AG04450 (cell line): ENCODE measurements at regions of chr3 and their contacts with region 1.

Region 1: DNA sequence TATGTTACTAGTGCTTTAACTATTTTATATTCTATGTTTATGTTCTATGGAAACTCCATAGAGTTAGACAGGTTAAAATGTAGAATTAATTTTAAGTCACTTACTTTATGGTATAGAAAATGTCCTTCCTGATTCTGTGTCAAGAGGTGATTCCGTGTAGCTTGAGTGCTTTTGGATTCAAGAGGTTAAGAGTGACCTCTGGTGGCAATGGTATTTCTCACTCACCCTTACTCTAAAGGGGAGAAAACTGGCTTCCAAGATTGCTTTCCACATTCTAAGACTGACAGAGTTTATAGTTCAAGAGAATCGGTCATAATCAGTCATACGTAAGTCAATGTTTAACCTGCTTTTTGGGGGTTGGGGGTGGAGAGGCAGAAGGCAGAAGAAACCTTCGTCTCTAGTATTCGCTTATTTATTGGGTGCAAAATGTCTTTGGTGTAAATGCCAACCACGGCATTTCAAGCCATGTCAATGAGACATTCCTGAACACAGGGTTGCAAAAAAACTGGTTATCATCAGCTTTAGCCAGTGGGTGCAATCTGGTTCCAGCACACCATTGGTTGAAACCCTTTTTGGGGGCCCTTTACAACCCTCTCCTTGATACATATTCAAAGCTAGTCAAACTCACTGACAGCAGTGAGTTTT is 92.0 kb upstream of the VGLL3 start:
- DNase-seq: peak; percentile 30
- H3K4me3 ChIP-seq: no peak overlapping the region
- H3K27ac ChIP-seq: no peak overlapping the region
- H3K27me3 ChIP-seq: no peaks in the 10 kb centered on the region
- CTCF ChIP-seq: peak; percentile 78

Region 2: GRCh38 chr3:86774082-86774691 is 308.7 kb before region 1 on chr3:
- CTCF ChIA-PET with region 1: interaction called, 165 read pairs
- POLR2A ChIA-PET with region 1: no interaction called
- DNase-seq: no peak
- H3K4me3 ChIP-seq: no peak overlapping the region
- H3K27ac ChIP-seq: no peak overlapping the region
- H3K27me3 ChIP-seq: no peaks in the 10 kb centered on the region
- CTCF ChIP-seq: peak; percentile 57

Region 3: DNA sequence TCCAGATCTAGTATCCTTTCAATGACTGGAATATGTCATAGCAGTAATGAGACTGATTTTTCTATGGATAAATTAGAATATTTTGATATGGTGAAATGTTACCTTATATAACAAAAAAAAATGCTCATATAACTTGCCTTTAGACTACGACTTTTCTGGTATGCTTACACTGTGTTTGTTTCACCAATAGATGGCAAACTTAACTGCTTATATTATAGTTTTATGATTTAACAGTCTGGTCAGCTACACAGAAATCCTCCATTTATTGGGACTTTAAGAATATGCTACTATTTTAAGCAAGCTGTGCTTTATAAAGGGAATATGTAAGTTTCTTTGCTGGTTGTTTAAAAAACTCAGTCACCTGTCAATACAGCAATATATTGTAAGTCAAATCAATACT is 297.5 kb before region 1 on chr3:
- CTCF ChIA-PET with region 1: interaction called, 65 read pairs
- POLR2A ChIA-PET with region 1: no interaction called
- DNase-seq: no peak
- H3K4me3 ChIP-seq: no peak overlapping the region
- H3K27ac ChIP-seq: no peak overlapping the region
- H3K27me3 ChIP-seq: no peaks in the 10 kb centered on the region
- CTCF ChIP-seq: peak; percentile 67

Region 4: GRCh38 chr3:86990734-86991481 is 92.0 kb before region 1 on chr3 and contains the start of gene VGLL3:
- CTCF ChIA-PET with region 1: interaction called, 11 read pairs
- POLR2A ChIA-PET with region 1: no interaction called
- DNase-seq: peak; percentile 64
- H3K4me3 ChIP-seq: peak within 1 kb of the TSS; percentile 94
- H3K27ac ChIP-seq: peak within 1 kb of the TSS; percentile 92
- H3K27me3 ChIP-seq: no peaks in the 10 kb centered on the region
- CTCF ChIP-seq: peak; percentile 40; the same call in 1 of the 2 replicates
- polyA plus RNA-seq, gene VGLL3: 27.2 and 28.3 TPM in 2 replicates

Region 5: DNA sequence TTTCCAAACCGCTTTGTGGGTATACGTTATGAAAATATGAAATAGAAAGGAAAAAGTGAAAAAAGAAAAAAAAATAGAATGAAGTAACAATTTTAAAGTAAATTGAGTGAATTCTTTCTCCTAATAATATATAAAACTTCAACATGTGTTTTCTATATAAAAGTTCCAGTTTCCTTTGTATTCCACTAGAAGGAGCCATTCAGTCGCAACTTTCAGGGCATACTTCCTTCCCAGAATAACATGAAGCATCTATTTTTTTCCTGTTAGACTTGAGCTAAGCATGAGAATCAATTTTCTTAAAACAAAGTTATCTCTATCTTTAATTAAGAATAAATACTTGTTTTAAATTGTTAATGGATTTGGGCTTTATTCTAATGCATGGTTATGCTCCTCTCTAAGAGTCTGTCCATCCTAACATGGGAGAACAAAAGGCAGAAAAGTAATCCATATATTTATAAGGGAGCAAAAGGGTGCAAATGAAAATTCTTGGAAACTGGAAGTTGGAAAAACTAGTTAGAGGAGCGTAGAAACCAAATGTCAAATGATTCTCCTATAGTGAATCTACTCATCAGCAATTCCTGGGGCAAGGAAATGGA is 76.0 kb before region 1 on chr3:
- CTCF ChIA-PET with region 1: interaction called, 17 read pairs
- POLR2A ChIA-PET with region 1: no interaction called
- DNase-seq: no peak
- H3K4me3 ChIP-seq: no peak overlapping the region
- H3K27ac ChIP-seq: no peak overlapping the region
- H3K27me3 ChIP-seq: no peaks in the 10 kb centered on the region
- CTCF ChIP-seq: peak; percentile 66

Region 6: GRCh38 chr3:87148020-87148419 is 65.1 kb after region 1 on chr3:
- CTCF ChIA-PET with region 1: no interaction called
- POLR2A ChIA-PET with region 1: no interaction called
- DNase-seq: no peak
- H3K4me3 ChIP-seq: no peak overlapping the region
- H3K27ac ChIP-seq: no peak overlapping the region
- H3K27me3 ChIP-seq: no peaks in the 10 kb centered on the region
- CTCF ChIP-seq: no peak

Region 7: DNA sequence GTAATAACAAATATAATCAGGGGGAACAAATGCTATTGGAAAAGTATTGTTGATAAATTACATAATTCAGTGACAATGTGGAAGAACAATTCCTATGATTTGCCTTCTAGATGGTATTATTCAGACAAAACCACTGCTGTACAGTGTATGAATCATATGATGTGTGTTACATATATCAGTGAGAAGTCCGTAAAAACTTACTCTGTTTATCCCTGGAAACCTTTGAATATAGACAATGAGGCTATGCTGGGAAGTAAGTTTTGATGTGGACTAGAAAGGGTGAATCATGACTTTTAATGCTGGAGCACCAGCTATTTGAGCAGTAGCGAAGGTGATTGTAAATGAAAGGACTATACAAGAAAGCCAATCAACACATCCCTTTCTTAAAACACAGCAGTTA is 1084.8 kb after region 1 on chr3:
- CTCF ChIA-PET with region 1: no interaction called
- POLR2A ChIA-PET with region 1: no interaction called
- DNase-seq: no peak
- H3K4me3 ChIP-seq: no peak overlapping the region
- H3K27ac ChIP-seq: no peak overlapping the region
- H3K27me3 ChIP-seq: no peaks in the 10 kb centered on the region
- CTCF ChIP-seq: no peak